ENCODE measurements at regions of chr10 and their contacts with region 1.

Region 1: GRCh38 chr10:69515699-69516259 is 57.4 kb downstream of the NEUROG3 start:
- DNase-seq: peak; percentile 58
- ATAC-seq: peak; percentile 76
- H3K4me3 Mint-ChIP-seq: no peak overlapping the region
- H3K27ac Mint-ChIP-seq: no peak overlapping the region
- H3K4me1 Mint-ChIP-seq: no peaks in the 10 kb centered on the region
- H3K27me3 Mint-ChIP-seq: peaks cover 42% of the 10 kb centered on the region
- CTCF ChIP-seq: peak; percentile 80

Region 2: GRCh38 chr10:69439813-69440506 is 75.8 kb before region 1 on chr10:
- CTCF ChIA-PET with region 1: no interaction called
- POLR2A ChIA-PET with region 1: no interaction called
- intact Hi-C with region 1: no loop called
- DNase-seq: no peak
- ATAC-seq: no peak
- H3K4me3 Mint-ChIP-seq: no peak overlapping the region
- H3K27ac Mint-ChIP-seq: no peak overlapping the region
- H3K4me1 Mint-ChIP-seq: no peaks in the 10 kb centered on the region
- H3K27me3 Mint-ChIP-seq: peaks cover 16% of the 10 kb centered on the region
- CTCF ChIP-seq: no peak

Region 3: DNA sequence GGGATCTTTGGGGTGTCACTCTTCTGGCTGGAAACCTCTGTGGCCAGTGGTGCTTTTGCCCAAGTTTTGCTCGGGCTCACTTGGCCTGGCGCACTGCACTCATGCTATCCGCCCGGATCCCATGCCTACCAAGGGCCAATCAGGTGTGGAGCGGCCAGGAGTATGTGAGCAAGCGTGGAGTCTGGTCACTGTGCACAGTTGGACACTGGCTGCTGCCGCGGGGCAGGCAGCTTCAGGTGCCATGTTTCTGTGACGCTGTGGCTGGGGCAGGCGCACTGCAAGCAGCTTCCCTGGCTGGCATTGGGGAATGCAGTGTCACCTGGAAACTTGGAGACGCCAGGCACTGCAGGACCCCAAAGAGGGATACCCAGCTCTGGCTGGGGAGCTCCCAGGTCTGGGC is 12.2 kb after region 1 on chr10:
- CTCF ChIA-PET with region 1: no interaction called
- POLR2A ChIA-PET with region 1: no interaction called
- intact Hi-C with region 1: loop called (anchors 1 kb)
- DNase-seq: no peak
- ATAC-seq: no peak
- H3K4me3 Mint-ChIP-seq: no peak overlapping the region
- H3K27ac Mint-ChIP-seq: no peak overlapping the region
- H3K4me1 Mint-ChIP-seq: no peaks in the 10 kb centered on the region
- H3K27me3 Mint-ChIP-seq: peaks cover 13% of the 10 kb centered on the region
- CTCF ChIP-seq: no peak

Region 4: DNA sequence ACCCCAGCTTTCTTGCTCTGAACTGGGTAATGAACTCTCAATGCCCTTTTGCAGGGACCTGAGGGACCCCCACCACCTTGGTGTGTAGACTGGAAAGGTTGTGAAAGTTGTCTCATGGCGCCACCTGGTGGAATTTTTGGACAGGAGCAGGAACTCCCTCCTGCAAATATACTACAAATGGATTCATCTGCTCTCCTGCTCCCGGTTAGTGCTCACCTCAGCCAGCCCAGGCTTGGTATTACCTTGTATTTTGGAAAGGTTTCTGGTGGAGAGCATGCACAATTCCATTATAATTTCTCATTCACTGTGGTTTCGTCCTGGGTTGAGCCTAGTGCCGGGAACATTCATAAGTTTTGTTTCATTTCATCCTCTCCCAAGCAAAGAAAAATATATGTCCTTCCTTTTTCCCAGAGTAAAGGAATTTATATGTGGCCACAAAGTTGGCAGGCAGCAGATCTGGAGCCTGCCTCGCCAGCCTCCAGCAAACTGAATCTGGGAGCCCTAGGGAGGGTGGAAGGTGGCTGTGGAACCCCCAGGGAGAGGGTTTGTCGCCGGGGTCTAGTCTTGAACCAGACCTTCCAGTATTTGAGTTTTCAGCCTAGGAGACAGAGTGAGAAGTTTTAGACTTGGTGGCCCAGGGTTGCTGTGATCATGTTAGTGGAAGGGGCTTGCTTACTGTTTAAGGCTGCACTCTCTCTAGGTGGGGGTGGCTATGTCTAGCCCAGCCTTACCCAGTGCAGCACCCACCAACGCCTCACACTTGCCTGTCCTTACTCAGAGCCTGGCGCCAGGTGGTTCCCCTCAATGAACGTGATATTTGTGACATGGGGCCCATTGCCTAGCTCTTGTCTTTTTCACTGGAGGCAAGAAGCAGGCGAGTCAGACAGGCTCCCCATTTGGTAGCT is 123.8 kb after region 1 on chr10:
- CTCF ChIA-PET with region 1: interaction called, 67 read pairs
- POLR2A ChIA-PET with region 1: no interaction called
- intact Hi-C with region 1: loop called (anchors 1 kb)
- DNase-seq: no peak
- ATAC-seq: peak; percentile 50
- H3K4me3 Mint-ChIP-seq: no peak overlapping the region
- H3K27ac Mint-ChIP-seq: no peak overlapping the region
- H3K4me1 Mint-ChIP-seq: no peaks in the 10 kb centered on the region
- H3K27me3 Mint-ChIP-seq: peaks cover 9% of the 10 kb centered on the region
- CTCF ChIP-seq: no peak

Region 5: DNA sequence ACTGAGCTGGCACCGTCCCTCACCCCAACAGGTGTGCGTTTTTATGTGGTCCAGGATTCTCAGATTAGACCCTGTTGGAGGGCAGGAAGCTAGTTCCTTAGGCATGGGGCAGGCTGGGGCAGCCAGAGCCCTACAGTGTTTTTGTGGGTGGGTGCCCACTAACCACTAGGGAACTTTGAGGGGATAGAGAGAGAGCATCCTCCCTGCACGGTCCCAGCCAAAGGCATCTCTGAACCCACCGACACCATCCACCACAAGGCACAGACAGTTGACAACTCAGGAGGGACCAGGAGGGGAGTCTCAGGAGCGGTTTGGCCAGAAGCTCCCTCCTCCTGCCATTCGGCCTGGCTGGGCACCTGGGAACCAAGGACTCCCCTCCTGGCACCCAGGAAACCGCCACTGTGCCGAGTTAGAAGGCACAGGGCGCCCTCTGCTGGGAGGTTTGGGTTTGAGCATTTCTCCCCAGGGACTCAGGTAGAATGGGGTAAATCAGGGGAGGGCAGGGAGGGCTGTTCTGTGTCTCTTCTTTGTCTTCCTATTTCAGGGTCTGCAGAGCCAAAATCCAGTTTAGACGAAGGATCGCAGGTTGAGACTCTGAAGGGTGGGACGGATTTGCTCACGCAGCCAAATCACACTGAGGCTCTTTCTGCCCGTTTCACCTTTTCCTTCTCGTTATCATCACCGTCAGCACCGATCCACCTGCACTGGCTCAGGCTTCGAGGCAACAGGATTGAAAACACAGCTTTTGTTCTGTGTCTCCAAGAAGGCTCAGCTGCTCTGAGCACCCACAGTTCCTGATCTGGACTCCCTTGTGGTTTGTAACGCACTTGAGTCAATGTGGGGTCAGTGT is 201.2 kb after region 1 on chr10:
- CTCF ChIA-PET with region 1: no interaction called
- POLR2A ChIA-PET with region 1: no interaction called
- intact Hi-C with region 1: loop called (anchors 2 kb)
- DNase-seq: no peak
- ATAC-seq: no peak
- H3K4me3 Mint-ChIP-seq: no peak overlapping the region
- H3K27ac Mint-ChIP-seq: no peak overlapping the region
- H3K4me1 Mint-ChIP-seq: no peaks in the 10 kb centered on the region
- H3K27me3 Mint-ChIP-seq: peaks cover 5% of the 10 kb centered on the region
- CTCF ChIP-seq: no peak

Region 6: DNA sequence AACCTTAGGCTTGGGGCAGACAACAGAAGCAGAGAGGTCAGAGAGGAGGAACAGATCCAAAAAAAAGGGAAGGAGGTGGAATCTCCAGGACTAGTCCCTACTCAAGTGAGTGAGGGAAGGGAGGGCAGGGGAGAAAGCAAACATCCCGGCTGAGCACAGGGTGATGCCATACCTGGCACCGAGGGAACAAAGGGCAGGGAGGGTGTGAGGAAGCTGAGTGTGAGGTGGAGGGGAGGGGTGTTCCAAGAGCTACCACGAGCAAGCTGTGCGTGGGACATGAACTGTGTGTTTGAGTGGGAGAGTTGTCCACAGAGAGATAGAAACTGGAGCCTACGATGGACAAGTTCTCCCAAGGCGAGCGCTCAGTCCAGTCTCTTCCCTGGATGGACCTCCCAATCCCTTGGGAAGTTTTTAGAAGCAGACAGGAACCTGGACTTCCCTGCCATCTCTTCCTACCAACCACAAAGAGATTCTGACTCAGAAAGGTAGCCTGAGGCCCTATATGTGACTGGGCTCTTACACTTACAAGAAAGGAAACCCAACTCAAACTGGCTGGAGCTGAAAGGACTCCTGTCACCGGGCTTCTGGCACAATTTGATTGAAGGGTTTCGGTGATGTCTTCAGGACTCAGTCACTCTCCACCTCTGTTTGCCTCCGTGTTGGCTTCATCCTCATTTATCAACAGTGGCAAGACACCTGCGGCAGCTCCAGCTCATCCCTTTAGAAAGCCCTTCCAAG is 282.0 kb after region 1 on chr10:
- CTCF ChIA-PET with region 1: no interaction called
- POLR2A ChIA-PET with region 1: no interaction called
- intact Hi-C with region 1: loop called (anchors 10 kb)
- DNase-seq: no peak
- ATAC-seq: no peak
- H3K4me3 Mint-ChIP-seq: no peak overlapping the region
- H3K27ac Mint-ChIP-seq: no peak overlapping the region
- H3K4me1 Mint-ChIP-seq: peaks cover 4% of the 10 kb centered on the region
- H3K27me3 Mint-ChIP-seq: peaks cover 37% of the 10 kb centered on the region
- CTCF ChIP-seq: no peak

Region 7: GRCh38 chr10:69957886-69958555 is 442.2 kb after region 1 on chr10:
- CTCF ChIA-PET with region 1: no interaction called
- POLR2A ChIA-PET with region 1: no interaction called
- intact Hi-C with region 1: loop called (anchors 5 kb)
- DNase-seq: no peak
- ATAC-seq: no peak
- H3K4me3 Mint-ChIP-seq: no peak overlapping the region
- H3K27ac Mint-ChIP-seq: no peak overlapping the region
- H3K4me1 Mint-ChIP-seq: peaks cover 39% of the 10 kb centered on the region
- H3K27me3 Mint-ChIP-seq: no peaks in the 10 kb centered on the region
- CTCF ChIP-seq: no peak

Measured in activated B cell treated with CpG ODN at 0.5 μM for 24 hours (primary cell).